Natural killer cell (primary cell): ENCODE measurements at regions of chr19 and their contacts with region 1.

Region 1: DNA sequence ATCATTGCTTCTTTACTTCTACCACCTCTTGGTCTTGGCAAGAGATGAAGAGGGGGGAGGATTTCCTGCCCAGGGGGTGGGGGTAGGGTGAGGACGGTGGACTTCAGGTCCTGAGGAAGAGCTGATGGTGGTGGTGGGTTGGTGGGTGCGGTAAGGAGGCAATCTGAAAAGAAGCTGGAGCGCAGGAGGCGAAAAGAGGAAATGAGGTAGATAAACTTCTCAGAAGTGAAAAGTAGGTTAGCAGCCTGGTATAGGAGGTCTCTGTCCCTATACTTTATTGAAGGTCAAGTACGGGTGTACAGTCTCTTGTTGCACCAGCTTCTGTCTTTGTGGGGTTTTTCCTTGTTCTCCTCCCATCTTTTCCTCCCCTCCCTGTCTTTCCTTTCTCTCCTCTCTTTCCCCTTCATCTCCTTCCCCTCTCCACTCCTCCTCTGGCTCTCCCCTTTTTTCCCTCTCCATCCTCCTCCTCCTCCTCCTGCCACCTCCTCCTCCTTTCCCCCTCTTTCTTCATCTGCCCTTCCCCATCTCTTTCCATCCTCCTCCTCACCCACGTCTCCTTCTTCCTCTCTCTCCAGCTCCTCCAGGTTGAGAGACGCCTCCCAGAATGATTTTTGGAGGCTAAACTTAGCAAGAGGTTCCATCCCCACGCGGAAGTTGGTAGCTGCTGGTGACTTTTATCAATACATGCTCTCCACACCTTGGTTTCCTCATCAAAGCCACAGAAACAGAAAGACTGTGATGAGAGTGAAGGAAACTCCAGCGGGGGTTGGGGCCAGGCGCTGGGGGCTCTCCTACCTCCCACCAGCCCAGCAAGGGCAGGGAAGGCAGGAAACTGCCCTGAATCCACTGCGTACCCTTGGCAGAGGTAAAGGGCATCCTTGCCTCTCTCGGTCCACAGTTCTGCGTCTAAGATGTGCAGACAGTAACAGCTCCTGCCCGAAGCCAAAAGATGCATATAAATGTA is 15.3 kb downstream of the TNFSF14 start:
- DNase-seq: peak; percentile 53 to 73
- ATAC-seq: peak; percentile 75 to 84 (median 79)
- H3K4me3 ChIP-seq: peak overlapping the region; percentile 29
- H3K4me3 Mint-ChIP-seq: peak overlapping the region; percentile 95
- H3K27ac ChIP-seq: peak overlapping the region; percentile 84
- H3K27ac Mint-ChIP-seq: peak overlapping the region; percentile 97 to 100
- H3K4me1 ChIP-seq: peaks cover 64% of the 10 kb centered on the region
- H3K4me1 Mint-ChIP-seq: peaks cover 47% of the 10 kb centered on the region in 2 donors
- H3K27me3 ChIP-seq: no peaks in the 10 kb centered on the region
- H3K27me3 Mint-ChIP-seq: no peaks in the 10 kb centered on the region
- CTCF ChIP-seq: no peak

Region 2: GRCh38 chr19:6590827-6591319 is 63.8 kb before region 1 on chr19 and contains the start of gene CD70:
- intact Hi-C with region 1: no loop called
- DNase-seq: peak in 1 of 2 donors; percentile 77
- ATAC-seq: peak; percentile 64 to 78 (median 69)
- H3K4me3 ChIP-seq: peak within 1 kb of the TSS; percentile 33
- H3K4me3 Mint-ChIP-seq: peak within 1 kb of the TSS; percentile 65
- H3K27ac ChIP-seq: peak within 1 kb of the TSS; percentile 15
- H3K27ac Mint-ChIP-seq: peak within 1 kb of the TSS in 1 of 2 donors; percentile 10
- H3K4me1 ChIP-seq: peaks cover 42% of the 10 kb centered on the region
- H3K4me1 Mint-ChIP-seq: peaks cover 19 to 42% of the 10 kb centered on the region in 2 donors
- H3K27me3 ChIP-seq: peaks cover 28% of the 10 kb centered on the region
- H3K27me3 Mint-ChIP-seq: peaks cover 56 to 63% of the 10 kb centered on the region in 2 donors
- CTCF ChIP-seq: no peak
- total RNA-seq, gene CD70: 0.52 to 1.2 (median 1.2) TPM

Region 3: DNA sequence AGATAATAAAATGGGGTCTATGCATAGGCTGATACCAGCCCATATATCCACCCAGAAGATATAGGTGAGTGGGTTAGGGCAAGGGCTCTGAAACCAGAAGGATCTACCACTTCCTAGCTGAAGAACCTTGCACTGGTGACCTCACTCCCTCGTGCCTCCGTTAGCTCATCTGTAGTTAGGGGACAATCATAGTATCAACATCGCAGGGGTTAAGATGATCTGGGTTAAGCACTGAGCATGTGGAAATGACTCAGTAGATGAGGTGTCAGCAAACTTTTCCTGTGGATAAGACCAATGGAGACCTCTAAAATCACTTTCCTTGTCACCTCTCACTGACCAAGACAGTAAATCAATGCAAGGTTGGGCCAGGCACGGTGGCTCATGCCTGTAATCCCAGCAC is 15.2 kb before region 1 on chr19:
- intact Hi-C with region 1: loop called (anchors 1 kb)
- DNase-seq: no peak
- ATAC-seq: peak; percentile 42 to 81 (median 57)
- H3K4me3 ChIP-seq: no peak overlapping the region
- H3K4me3 Mint-ChIP-seq: peak overlapping the region; percentile 13
- H3K27ac ChIP-seq: no peak overlapping the region
- H3K27ac Mint-ChIP-seq: peak overlapping the region; percentile 83 to 89
- H3K4me1 ChIP-seq: peaks cover 42% of the 10 kb centered on the region
- H3K4me1 Mint-ChIP-seq: peaks cover 19 to 38% of the 10 kb centered on the region in 2 donors
- H3K27me3 ChIP-seq: no peaks in the 10 kb centered on the region
- H3K27me3 Mint-ChIP-seq: no peaks in the 10 kb centered on the region
- CTCF ChIP-seq: no peak